WTC11 (cell line): ENCODE measurements at regions of chr7 and their contacts with region 1.

Region 1: GRCh38 chr7:126803060-126803665 is 449.6 kb downstream of the GRM8 start:
- DNase-seq: peak; percentile 59
- ATAC-seq: peak; percentile 91
- H3K4me3 Mint-ChIP-seq: no peak overlapping the region
- H3K27ac Mint-ChIP-seq: no peak overlapping the region
- H3K4me1 Mint-ChIP-seq: peaks cover 11% of the 10 kb centered on the region
- H3K27me3 Mint-ChIP-seq: no peaks in the 10 kb centered on the region
- CTCF ChIP-seq: peak; percentile 67

Region 2: GRCh38 chr7:126685018-126685573 is 118.1 kb before region 1 on chr7:
- CTCF ChIA-PET with region 1: no interaction called
- POLR2A ChIA-PET with region 1: no interaction called
- DNase-seq: no peak
- ATAC-seq: no peak
- H3K4me3 Mint-ChIP-seq: no peak overlapping the region
- H3K27ac Mint-ChIP-seq: no peak overlapping the region
- H3K4me1 Mint-ChIP-seq: peaks cover 22% of the 10 kb centered on the region
- H3K27me3 Mint-ChIP-seq: no peaks in the 10 kb centered on the region
- CTCF ChIP-seq: no peak

Region 3: GRCh38 chr7:127047521-127047920 is 244.4 kb after region 1 on chr7:
- CTCF ChIA-PET with region 1: interaction called, 5 read pairs
- POLR2A ChIA-PET with region 1: interaction called, 11 read pairs
- DNase-seq: no peak
- ATAC-seq: no peak
- H3K4me3 Mint-ChIP-seq: no peak overlapping the region
- H3K27ac Mint-ChIP-seq: no peak overlapping the region
- H3K4me1 Mint-ChIP-seq: no peaks in the 10 kb centered on the region
- H3K27me3 Mint-ChIP-seq: peaks cover 5% of the 10 kb centered on the region
- CTCF ChIP-seq: no peak

Region 4: DNA sequence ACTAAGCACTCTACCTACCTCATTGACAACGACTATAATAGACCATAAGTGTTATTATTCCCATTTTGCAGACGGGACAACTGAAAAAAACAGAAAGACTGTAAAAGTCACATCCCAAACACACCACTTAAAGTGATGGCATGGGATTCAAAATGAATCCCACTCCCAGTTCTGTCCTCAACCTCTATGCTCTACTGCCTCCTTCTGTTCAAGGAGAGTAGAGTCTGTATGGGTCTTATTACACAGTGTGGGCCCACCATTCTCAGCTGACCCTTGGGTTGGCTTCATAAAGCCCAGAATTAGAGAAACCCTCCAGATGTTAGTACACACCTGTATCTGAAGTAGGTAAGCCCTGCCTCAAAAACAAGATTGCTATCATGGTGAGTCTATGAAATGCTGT is 347.4 kb after region 1 on chr7:
- CTCF ChIA-PET with region 1: interaction called, 14 read pairs
- POLR2A ChIA-PET with region 1: interaction called, 3 read pairs
- DNase-seq: no peak
- ATAC-seq: peak; percentile 98
- H3K4me3 Mint-ChIP-seq: no peak overlapping the region
- H3K27ac Mint-ChIP-seq: no peak overlapping the region
- H3K4me1 Mint-ChIP-seq: peaks cover 5% of the 10 kb centered on the region
- H3K27me3 Mint-ChIP-seq: no peaks in the 10 kb centered on the region
- CTCF ChIP-seq: 0 out of 2 replicates have a peak, but pooled peaks have one; percentile 39